Kidney (tissue), 22 donors: ENCODE measurements at regions of chr1 and their contacts with region 1.

Region 1: GRCh38 chr1:247119600-247120407 is 15.6 kb upstream of the ZNF669 start:
- DNase-seq: no peak
- H3K4me3 ChIP-seq: no peak overlapping the region
- H3K27ac ChIP-seq: no peak overlapping the region
- H3K4me1 ChIP-seq: no peaks in the 10 kb centered on the region
- H3K27me3 ChIP-seq: no peaks in the 10 kb centered on the region
- CTCF ChIP-seq: no peak

Region 2: GRCh38 chr1:246875041-246876026 is 244.5 kb before region 1 on chr1:
- intact Hi-C with region 1: no loop called
- DNase-seq: no peak
- H3K4me3 ChIP-seq: no peak overlapping the region
- H3K27ac ChIP-seq: no peak overlapping the region
- H3K4me1 ChIP-seq: no peaks in the 10 kb centered on the region
- H3K27me3 ChIP-seq: no peaks in the 10 kb centered on the region
- CTCF ChIP-seq: no peak

Region 3: DNA sequence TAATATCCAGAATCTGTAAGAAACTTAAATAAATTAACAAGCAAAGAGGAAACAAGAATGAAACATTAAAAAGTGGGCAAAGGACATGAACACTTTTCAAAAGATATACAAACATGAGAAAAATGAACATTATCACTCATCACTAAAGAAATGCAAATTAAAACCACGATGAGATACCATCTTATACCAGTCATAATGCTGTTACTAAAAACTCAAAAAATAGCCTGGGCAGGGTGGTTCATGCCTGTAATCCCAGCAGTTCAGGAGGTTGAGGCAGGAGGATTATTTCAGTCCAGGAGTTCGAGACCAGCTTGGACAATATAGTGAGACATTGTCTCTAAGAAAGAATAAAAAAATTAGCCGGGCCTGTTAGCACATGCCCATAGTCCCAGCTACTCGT is 45.9 kb after region 1 on chr1:
- intact Hi-C with region 1: loop called (anchors 5 kb)
- DNase-seq: no peak
- H3K4me3 ChIP-seq: no peak overlapping the region
- H3K27ac ChIP-seq: no peak overlapping the region
- H3K4me1 ChIP-seq: no peaks in the 10 kb centered on the region
- H3K27me3 ChIP-seq: no peaks in the 10 kb centered on the region
- CTCF ChIP-seq: no peak

Region 4: DNA sequence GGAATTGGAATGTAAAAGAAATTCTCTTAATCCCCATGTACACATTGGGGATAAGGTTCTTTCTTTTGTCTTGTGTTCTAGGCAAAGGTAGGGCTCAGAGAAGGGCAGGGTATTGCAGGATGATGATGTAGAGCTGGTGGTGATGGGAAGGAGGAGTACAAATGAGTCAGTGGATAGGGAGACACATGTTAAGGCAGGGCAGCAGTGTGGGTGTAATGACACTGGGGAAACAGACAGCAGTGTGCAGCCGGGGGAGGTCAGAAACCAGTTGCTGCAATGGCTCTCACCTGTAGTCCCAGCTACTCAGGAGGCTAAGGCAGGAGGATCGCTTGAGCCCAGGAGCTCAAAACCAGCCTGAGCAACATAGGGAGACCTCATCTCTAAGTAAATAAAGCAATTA is 301.3 kb after region 1 on chr1:
- intact Hi-C with region 1: no loop called
- DNase-seq: peak in 1 of 5 donors; percentile 12
- H3K4me3 ChIP-seq: no peak overlapping the region
- H3K27ac ChIP-seq: no peak overlapping the region
- H3K4me1 ChIP-seq: no peaks in the 10 kb centered on the region
- H3K27me3 ChIP-seq: no peaks in the 10 kb centered on the region
- CTCF ChIP-seq: no peak